ENCODE measurements at regions of chr19 and their contacts with region 1.

Region 1: GRCh38 chr19:46614114-46614722 is 10.7 kb downstream of the PTGIR start:
- DNase-seq: peak; percentile 80
- H3K4me3 Mint-ChIP-seq: no peak overlapping the region
- H3K27ac Mint-ChIP-seq: no peak overlapping the region
- H3K4me1 Mint-ChIP-seq: peaks cover 7% of the 10 kb centered on the region
- H3K27me3 Mint-ChIP-seq: no peaks in the 10 kb centered on the region
- CTCF ChIP-seq: peak; percentile 82

Region 2: GRCh38 chr19:46600384-46601317 is 13.6 kb before region 1 on chr19:
- CTCF ChIA-PET with region 1: interaction called, 25 read pairs
- POLR2A ChIA-PET with region 1: interaction called, 16 read pairs
- intact Hi-C with region 1: no loop called
- DNase-seq: peak; percentile 98
- H3K4me3 Mint-ChIP-seq: peak overlapping the region; percentile 96
- H3K27ac Mint-ChIP-seq: peak overlapping the region; percentile 100
- H3K4me1 Mint-ChIP-seq: peaks cover 4% of the 10 kb centered on the region
- H3K27me3 Mint-ChIP-seq: no peaks in the 10 kb centered on the region
- CTCF ChIP-seq: no peak

Region 3: GRCh38 chr19:46634045-46634655 is 19.9 kb after region 1 on chr19:
- CTCF ChIA-PET with region 1: interaction called, 75 read pairs
- POLR2A ChIA-PET with region 1: interaction called, 3 read pairs
- intact Hi-C with region 1: no loop called
- DNase-seq: peak; percentile 95
- H3K4me3 Mint-ChIP-seq: peak overlapping the region; percentile 48
- H3K27ac Mint-ChIP-seq: no peak overlapping the region
- H3K4me1 Mint-ChIP-seq: peaks cover 14% of the 10 kb centered on the region
- H3K27me3 Mint-ChIP-seq: peaks cover 11% of the 10 kb centered on the region
- CTCF ChIP-seq: no peak

Region 4: DNA sequence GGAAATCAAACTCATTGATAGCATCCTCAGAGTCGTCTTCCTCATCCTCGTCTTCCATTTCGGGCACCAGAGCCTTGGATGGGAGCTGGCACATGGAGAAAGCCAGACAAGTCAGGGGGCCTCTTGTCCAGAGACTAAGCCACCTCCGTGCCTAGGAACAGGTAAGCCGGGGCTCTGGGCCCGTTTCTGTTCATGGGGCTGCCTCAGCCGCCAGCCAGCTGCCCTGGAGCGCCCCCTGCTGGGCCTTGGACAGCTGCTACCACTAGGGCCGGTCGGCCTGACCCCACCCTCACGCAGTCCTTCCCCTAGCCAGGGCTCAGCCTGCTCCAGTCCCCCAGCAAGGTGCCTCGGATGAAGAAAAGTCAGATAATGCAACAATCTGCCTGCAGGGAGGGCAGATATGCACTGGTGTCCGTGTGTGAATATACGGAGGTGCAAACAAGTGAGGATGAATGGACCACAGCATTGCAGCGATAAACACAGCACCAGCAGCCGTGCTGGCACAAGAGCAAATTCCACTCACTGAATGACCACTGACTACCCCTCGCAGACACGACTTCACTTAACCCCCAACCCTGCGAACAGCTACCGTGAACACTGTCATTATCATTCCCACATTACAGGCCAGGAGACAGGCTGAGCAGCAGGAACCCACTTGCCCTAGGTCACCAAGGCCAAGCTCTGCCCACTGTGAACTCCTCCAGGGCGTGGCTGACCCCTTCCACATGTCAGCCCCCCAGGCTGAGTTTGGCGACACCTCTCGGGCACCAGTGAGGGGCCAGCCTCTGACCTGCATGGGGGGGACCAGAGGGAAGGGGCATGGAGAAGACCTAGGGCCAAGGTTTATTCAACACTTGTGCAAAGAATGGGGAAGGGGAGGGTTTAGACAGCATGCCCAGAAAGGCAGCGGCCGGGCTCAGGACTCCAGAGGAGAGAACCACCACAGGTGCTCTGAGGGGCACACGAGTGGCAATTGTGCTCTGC is 114.8 kb after region 1 on chr19:
- CTCF ChIA-PET with region 1: interaction called, 10 read pairs
- POLR2A ChIA-PET with region 1: interaction called, 3 read pairs
- intact Hi-C with region 1: no loop called
- DNase-seq: peak; percentile 62
- H3K4me3 Mint-ChIP-seq: no peak overlapping the region
- H3K27ac Mint-ChIP-seq: no peak overlapping the region
- H3K4me1 Mint-ChIP-seq: peaks cover 10% of the 10 kb centered on the region
- H3K27me3 Mint-ChIP-seq: no peaks in the 10 kb centered on the region
- CTCF ChIP-seq: peak; percentile 86